GM18951 (cell line): ENCODE measurements at regions of chr9 and their contacts with region 1.

Region 1: GRCh38 chr9:68584189-68585033 is 43.7 kb upstream of the TMEM252 start:
- POLR2A ChIP-seq: no peak

Region 2: DNA sequence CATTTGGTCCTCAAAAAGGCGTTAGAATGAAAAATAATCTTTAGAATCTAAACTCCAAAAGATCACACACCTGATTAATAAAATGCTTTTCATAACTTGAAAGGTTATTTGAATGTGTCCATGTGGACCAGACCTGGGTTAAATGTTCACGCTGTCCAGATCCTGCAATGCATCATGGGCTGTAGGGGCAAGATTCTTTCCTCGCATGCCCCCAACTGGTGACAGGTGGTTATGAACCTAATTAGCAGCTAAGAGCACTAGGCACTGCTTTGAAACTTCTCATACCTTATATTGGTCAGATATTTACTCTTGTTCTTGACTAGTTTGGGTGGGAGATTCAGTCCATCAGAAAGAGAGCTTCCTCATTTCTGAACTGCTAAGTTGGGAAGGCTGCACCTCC is 101.4 kb after region 1 on chr9:
- in situ Hi-C with region 1: loop called (anchors 10 kb)
- POLR2A ChIP-seq: no peak

Region 3: DNA sequence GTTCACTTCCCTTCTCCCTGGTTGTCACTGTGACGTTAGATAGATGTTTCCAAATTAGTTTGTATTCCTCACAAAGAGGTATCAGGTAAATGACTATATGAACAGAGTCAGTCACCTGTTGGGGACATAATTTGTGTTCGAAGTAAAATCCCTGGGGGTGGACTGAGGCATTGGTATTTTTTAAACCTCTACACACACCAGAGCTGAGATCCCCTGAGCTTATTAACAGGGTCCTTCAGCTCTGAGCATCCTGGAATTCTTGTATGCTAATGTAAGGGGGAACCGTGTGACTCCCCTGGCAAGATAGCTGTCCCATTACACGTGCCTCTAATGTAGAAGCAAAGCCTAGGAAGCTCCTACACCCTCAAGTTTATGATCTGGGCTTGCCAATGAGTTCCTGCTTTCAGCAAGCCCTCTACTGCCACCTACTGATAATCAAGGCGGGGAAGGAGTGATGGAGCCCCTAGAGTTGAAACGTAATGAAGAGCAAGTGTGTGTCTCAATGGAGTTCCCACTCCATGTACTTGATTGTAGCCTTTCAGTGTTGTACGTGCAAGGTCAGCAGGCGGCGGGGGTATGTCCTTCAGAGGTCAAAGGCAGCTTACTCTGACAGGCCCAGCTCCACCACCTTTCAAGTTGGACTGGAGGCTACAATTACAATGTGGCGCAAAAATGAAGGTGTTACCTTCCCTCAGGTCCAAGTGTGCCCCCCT is 415.1 kb after region 1 on chr9:
- in situ Hi-C with region 1: loop called (anchors 5 kb)
- POLR2A ChIP-seq: no peak